Activated CD4-positive, alpha-beta memory T cell treated with anti-CD3 and anti-CD28 coated beads, Interleukin-2, amount 10 ng/mL, durations not matched to agents 7 days and 5 days (primary cell): ENCODE measurements at regions of chr11 and their contacts with region 1.

Region 1: DNA sequence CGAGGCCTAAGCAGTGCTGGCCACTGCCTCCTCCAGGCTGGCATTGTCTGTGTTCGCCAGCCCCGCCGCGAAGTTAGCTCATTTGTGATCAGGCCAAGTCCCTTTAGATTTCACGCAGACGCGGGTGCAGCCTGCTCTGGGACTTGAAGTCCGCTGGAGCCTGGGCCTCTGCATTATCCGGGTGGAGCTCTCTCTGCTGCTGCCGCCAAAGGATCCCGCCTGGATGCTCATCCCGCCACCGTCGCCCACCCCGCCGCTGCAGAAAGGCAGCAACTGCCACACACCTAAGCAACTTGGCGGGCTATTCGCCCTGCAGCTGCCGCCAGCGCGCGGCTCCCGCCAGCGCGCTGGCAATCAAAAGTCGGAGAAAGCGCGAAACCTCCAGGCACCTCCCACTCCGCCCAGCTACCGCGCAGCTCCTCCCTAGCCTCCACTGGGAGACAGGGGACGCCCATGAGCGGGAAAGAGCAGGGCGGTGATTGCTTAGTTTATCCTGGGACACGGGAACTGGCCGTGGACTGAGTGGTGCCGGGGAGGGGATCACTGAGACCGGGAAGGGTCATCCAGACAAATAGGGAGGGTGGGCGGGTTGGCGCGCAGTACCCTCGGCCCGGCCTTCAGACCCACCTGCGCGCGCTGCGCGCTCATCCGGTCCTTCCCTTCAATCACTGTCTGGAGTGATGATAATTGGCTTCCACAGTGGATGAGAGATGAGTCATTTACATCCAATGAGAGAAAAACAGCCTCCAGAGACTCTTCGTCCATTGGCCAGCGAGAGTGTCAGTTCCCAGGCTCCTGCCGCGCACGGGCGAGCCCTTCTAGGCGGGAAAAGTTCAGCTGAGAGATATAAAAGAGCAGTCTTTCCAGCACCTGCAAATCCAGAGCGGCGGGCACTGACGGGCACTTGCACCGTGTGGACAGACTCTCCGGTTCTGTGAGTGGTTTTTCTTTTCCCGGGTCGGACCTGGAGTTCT is at the start of gene FAM111B:
- DNase-seq: peak; percentile 84
- H3K4me3 Mint-ChIP-seq: peak within 1 kb of the TSS; percentile 86
- H3K27ac Mint-ChIP-seq: peak within 1 kb of the TSS; percentile 72
- H3K4me1 Mint-ChIP-seq: peaks cover 77% of the 10 kb centered on the region
- H3K27me3 Mint-ChIP-seq: no peaks in the 10 kb centered on the region
- total RNA-seq, gene FAM111B: 47.2 to 48.6 TPM

Region 2: DNA sequence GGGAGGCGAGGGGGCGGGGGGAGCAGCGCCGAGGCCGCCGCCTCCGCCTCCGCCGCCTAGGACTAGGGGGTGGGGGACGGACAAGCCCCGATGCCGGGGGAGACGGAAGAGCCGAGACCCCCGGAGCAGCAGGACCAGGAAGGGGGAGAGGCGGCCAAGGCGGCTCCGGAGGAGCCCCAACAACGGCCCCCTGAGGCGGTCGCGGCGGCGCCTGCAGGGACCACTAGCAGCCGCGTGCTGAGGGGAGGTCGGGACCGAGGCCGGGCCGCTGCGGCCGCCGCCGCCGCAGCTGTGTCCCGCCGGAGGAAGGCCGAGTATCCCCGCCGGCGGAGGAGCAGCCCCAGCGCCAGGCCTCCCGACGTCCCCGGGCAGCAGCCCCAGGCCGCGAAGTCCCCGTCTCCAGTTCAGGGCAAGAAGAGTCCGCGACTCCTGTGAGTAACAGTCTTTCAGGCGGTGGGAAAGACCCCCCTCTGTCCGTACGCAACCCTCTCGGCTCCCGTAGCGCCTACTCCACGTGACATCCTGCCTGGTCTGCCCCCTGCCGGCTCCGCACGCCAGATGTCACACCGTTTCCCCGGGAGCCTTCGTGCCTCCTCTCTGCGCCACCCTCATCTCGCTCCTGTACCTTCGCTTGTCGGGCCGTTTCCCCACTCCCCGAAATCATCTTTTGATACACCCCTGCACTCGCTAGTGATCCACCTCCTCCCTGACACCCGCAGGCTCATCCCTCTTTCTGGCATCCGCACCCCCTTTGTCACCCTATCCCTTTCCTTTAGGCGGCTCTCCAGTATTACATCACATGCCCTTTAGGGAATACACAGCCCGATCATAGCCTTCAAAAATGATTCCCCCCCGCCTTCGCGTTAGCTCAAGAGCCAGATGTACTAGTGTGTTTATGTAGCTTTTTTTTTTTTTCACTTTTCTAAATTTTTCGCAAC is 527.2 kb before region 1 on chr11:
- CTCF ChIA-PET with region 1: no interaction called
- POLR2A ChIA-PET with region 1: interaction called, 22 read pairs
- DNase-seq: peak; percentile 92
- H3K4me3 Mint-ChIP-seq: peak overlapping the region; percentile 94
- H3K27ac Mint-ChIP-seq: peak overlapping the region; percentile 100
- H3K4me1 Mint-ChIP-seq: peaks cover 57% of the 10 kb centered on the region
- H3K27me3 Mint-ChIP-seq: no peaks in the 10 kb centered on the region

Region 3: GRCh38 chr11:58958500-58958899 is 148.2 kb before region 1 on chr11:
- CTCF ChIA-PET with region 1: no interaction called
- POLR2A ChIA-PET with region 1: no interaction called
- DNase-seq: peak; percentile 31
- H3K4me3 Mint-ChIP-seq: no peak overlapping the region
- H3K27ac Mint-ChIP-seq: no peak overlapping the region
- H3K4me1 Mint-ChIP-seq: no peaks in the 10 kb centered on the region
- H3K27me3 Mint-ChIP-seq: peaks cover 10% of the 10 kb centered on the region

Region 4: GRCh38 chr11:59119826-59120225 is 13.2 kb after region 1 on chr11:
- CTCF ChIA-PET with region 1: no interaction called
- POLR2A ChIA-PET with region 1: interaction called, 20 read pairs
- DNase-seq: no peak
- H3K4me3 Mint-ChIP-seq: no peak overlapping the region
- H3K27ac Mint-ChIP-seq: no peak overlapping the region
- H3K4me1 Mint-ChIP-seq: peaks cover 3% of the 10 kb centered on the region
- H3K27me3 Mint-ChIP-seq: no peaks in the 10 kb centered on the region

Region 5: DNA sequence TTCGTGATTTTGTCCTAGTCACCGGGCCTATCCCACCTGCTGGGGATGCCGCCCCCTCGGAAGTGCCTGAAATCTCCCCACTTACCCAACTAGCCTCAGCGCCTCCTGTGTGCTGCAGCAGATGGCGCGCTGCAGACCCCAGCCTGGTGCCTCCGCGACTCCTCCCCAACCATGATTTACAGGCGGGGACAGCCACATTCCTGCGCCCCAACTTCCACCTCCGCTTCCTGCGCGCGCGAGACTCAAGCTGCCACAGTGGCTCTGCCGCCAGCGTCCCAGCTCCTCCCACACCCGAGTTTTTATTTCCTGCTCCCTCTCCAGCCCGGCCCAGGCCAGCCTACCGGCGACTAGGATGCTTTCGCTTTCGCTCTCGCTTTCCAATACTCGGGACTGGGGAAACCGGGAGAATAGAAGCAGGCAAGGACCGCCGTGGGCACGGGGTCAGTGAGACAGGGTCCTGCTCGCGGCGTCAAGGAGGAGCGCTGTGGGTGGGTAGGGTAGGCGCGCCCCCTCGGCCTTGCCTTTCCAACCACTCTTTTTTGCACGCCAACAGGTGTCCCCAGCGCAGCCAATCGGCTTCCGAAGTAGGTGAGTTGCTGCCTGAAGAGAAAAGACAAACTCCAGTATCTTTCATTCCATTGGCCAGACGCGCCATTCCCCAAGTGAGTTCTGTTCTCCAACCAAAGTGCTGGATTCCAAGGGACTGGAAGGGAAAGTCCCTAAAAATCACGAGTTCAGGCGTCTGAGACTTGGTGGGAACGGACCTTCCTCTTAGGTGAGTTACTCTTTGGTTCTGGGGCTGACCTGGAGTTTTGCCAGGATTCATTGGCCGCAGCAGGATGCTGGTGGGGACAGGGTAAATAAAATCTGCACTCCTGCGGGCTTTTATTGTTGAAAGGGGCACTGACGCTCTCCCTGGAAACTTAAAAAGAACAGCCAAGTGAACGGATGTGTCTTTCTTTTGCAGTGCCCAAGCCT is 36.2 kb after region 1 on chr11 and contains the start of gene FAM111A:
- CTCF ChIA-PET with region 1: interaction called, 16 read pairs
- POLR2A ChIA-PET with region 1: interaction called, 169 read pairs
- DNase-seq: peak; percentile 91
- H3K4me3 Mint-ChIP-seq: peak within 1 kb of the TSS; percentile 95
- H3K27ac Mint-ChIP-seq: peak within 1 kb of the TSS; percentile 93
- H3K4me1 Mint-ChIP-seq: peaks cover 58% of the 10 kb centered on the region
- H3K27me3 Mint-ChIP-seq: no peaks in the 10 kb centered on the region
- total RNA-seq, gene FAM111A: 136 to 141 TPM

Region 6: DNA sequence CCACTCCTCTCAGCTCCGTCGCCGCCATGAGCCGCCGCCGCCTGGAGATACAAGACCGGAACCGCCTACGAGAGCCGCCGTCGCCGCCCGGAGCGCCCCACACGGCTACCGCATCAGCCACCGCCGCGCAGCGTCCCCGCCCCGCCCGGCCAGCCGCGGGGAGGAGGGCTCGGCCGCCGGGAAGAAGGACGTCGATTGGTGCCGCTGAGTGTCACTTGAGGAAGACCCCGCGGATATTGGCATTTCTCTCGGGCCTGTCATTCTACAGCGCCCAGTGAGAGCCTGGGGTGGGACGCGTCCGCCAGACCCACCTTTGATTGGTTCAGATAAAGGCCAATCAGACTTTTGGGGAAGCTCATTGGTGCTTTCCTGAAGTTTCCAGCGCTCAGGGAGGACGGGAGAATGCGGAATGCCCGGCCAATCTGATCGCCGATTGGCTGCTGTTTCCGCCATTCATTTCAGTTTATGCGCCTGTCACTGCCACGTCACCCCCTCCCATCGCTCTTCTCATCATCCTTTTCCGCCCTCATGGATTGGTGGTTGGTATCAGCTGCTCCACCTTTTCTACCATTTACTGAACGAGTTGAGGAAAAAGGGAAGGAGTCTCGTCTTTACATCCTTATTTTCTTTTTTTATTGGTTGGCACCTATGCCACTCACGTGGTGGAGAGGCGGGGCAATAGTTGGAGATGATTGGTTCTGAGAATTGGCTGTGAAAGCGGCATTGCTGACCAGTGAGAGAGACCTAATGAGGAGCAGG is 509.2 kb after region 1 on chr11 and contains the start of gene OSBP:
- CTCF ChIA-PET with region 1: no interaction called
- POLR2A ChIA-PET with region 1: interaction called, 10 read pairs
- DNase-seq: peak; percentile 99
- H3K4me3 Mint-ChIP-seq: peak within 1 kb of the TSS; percentile 82
- H3K27ac Mint-ChIP-seq: peak within 1 kb of the TSS; percentile 89
- H3K4me1 Mint-ChIP-seq: peaks cover 51% of the 10 kb centered on the region
- H3K27me3 Mint-ChIP-seq: no peaks in the 10 kb centered on the region
- total RNA-seq, gene OSBP: 40.4 to 41.5 TPM